Dorsolateral prefrontal cortex (tissue), 120 donors: ENCODE measurements at regions of chr5 and their contacts with region 1.

Region 1: GRCh38 chr5:148186248-148186996 is 16.4 kb upstream of the SPINK6 start:
- DNase-seq: no peak
- H3K4me3 ChIP-seq: no peak overlapping the region
- H3K27ac ChIP-seq: peak overlapping the region in 1 of 59 donors; percentile 2
- H3K27me3 ChIP-seq: no peaks in the 10 kb centered on the region
- CTCF ChIP-seq: no peak

Region 2: DNA sequence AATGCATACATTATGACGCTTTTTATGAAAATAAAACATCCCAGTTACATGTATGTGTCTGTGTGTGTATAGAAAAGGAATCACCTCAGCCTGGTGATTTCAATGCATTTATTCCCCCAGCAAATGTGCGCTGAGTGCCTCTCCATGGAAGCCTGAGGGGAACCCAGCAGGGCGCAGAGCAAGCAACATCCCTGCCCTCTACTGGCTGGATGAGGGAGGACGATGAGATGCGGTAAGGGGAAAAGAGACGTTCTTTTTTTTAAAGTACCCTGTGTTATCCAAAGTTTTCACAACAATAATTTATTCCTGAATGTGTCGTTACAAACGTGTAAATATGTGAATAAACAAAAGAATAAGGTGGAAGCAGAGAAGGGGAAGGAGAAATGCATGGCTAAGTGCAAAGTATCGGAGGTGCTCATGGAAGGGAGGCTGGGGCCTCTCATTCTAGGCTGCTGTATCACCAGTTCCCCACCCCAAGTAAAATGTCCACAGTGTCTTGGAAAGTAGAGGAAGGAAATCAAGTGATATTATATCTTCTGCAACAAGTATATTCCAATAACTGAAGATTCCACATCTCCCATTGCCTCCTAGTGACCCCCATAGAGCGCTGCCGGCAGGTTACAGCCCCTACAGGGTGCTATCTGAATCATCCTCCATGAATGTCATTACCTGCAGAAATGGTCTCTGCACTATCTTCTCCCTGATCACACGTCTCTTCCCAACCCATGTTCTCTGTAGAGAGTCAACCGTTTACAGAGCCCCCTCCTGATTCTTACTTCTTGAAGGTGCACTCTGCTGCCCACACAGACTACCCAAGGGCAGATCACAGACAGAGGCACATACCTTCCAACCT is 941.8 kb after region 1 on chr5:
- intact Hi-C with region 1: loop called in 1 of 2 experiments (anchors 10 kb)
- DNase-seq: no peak
- H3K4me3 ChIP-seq: no peak overlapping the region
- H3K27ac ChIP-seq: no peak overlapping the region
- H3K27me3 ChIP-seq: no peaks in the 10 kb centered on the region
- CTCF ChIP-seq: peak in 55 of 56 donors; percentile 36 to 74 (median 59)